PC-9 (cell line): ENCODE measurements at regions of chr3 and their contacts with region 1.

Region 1: DNA sequence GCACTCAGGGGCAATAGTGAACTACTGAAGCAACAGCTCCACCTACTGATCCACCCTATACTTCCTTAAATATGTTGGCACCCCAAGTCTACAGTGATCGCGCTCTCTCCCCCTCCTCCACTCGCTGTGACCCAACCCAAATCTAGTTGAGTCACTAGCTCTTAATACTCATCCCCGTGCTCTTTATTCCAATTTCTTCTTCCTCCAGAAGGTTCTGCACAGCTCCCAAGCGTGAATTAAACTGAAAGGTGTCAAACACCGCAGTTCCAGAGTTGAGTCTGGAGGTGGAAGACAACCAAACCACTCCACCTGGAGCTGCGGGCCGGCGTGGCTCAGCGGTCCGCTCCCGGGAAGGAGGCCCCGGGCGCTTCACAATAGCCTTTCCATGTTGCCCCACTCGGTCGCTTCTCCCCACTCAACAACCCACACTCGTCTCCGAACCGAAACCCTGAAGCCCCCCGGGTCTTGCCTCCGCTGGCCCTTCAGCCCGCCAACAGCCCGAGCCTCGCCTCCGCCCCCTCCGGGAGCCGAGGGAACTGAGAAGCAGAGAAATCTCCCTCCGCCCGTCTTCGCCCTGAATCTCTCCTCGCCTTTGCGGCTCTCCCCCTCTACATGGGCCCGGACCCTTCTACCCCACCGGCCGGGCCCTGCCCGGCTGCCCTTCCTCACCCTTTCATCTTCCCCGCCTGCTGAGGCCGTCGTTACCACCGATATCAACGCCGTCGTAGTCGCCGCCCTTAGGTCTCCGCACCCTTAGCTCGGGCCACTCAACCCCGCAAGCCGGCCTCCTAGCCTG is 578 bp downstream of the NAA50 start:
- DNase-seq: peak; percentile 79 to 86
- H3K4me3 ChIP-seq: peak overlapping the region; percentile 77
- H3K27ac ChIP-seq: peak overlapping the region; percentile 98
- H3K4me1 ChIP-seq: peaks cover 51% of the 10 kb centered on the region
- H3K27me3 ChIP-seq: no peaks in the 10 kb centered on the region
- CTCF ChIP-seq: peak; percentile 72

Region 2: DNA sequence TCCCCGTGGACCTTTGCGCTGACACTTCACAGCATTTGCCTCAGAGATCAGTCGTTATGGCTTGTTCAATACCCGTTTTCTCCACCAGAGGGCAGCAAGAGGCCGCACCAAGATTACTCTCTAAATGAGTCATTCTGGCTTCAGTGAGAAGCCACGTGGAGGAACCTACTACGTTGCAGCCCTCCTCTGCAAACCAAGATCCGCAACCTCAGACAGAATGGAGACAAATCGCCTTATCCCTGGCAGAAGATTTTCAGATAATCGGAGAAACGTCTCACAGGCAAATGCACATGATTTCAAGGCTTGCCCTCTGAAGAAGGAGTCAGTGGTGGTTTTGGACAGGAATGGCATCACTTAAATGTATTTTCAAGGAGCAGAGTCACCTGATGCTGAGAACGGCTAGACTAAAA is 694.2 kb before region 1 on chr3:
- CTCF ChIA-PET with region 1: no interaction called
- POLR2A ChIA-PET with region 1: no interaction called
- intact Hi-C with region 1: loop called (anchors 1 kb)
- DNase-seq: peak; percentile 63 to 82
- H3K4me3 ChIP-seq: no peak overlapping the region
- H3K27ac ChIP-seq: no peak overlapping the region
- H3K4me1 ChIP-seq: no peaks in the 10 kb centered on the region; the same call in 1 of the 2 replicates
- H3K27me3 ChIP-seq: no peaks in the 10 kb centered on the region
- CTCF ChIP-seq: peak; percentile 94

Region 3: GRCh38 chr3:113575206-113575605 is 170.3 kb before region 1 on chr3:
- CTCF ChIA-PET with region 1: no interaction called
- POLR2A ChIA-PET with region 1: no interaction called
- intact Hi-C with region 1: loop called (anchors 5 kb)
- DNase-seq: no peak
- H3K4me3 ChIP-seq: no peak overlapping the region
- H3K27ac ChIP-seq: no peak overlapping the region
- H3K4me1 ChIP-seq: peaks cover 13% of the 10 kb centered on the region
- H3K27me3 ChIP-seq: no peaks in the 10 kb centered on the region
- CTCF ChIP-seq: no peak

Region 4: GRCh38 chr3:113783463-113783862 is 38.0 kb after region 1 on chr3:
- CTCF ChIA-PET with region 1: interaction called, 6 read pairs
- POLR2A ChIA-PET with region 1: no interaction called
- intact Hi-C with region 1: loop called (anchors 1 kb)
- DNase-seq: peak; percentile 14 to 56
- H3K4me3 ChIP-seq: no peak overlapping the region
- H3K27ac ChIP-seq: peak overlapping the region; percentile 60; the same call in 1 of the 2 replicates
- H3K4me1 ChIP-seq: no peaks in the 10 kb centered on the region
- H3K27me3 ChIP-seq: no peaks in the 10 kb centered on the region
- CTCF ChIP-seq: no peak

Region 5: GRCh38 chr3:113897373-113897777 is 151.9 kb after region 1 on chr3:
- CTCF ChIA-PET with region 1: no interaction called
- POLR2A ChIA-PET with region 1: no interaction called
- intact Hi-C with region 1: loop called (anchors 1 kb)
- DNase-seq: peak; percentile 23 to 85
- H3K4me3 ChIP-seq: peak overlapping the region; percentile 49
- H3K27ac ChIP-seq: peak overlapping the region; percentile 48
- H3K4me1 ChIP-seq: peaks cover 33% of the 10 kb centered on the region
- H3K27me3 ChIP-seq: no peaks in the 10 kb centered on the region
- CTCF ChIP-seq: no peak

Region 6: DNA sequence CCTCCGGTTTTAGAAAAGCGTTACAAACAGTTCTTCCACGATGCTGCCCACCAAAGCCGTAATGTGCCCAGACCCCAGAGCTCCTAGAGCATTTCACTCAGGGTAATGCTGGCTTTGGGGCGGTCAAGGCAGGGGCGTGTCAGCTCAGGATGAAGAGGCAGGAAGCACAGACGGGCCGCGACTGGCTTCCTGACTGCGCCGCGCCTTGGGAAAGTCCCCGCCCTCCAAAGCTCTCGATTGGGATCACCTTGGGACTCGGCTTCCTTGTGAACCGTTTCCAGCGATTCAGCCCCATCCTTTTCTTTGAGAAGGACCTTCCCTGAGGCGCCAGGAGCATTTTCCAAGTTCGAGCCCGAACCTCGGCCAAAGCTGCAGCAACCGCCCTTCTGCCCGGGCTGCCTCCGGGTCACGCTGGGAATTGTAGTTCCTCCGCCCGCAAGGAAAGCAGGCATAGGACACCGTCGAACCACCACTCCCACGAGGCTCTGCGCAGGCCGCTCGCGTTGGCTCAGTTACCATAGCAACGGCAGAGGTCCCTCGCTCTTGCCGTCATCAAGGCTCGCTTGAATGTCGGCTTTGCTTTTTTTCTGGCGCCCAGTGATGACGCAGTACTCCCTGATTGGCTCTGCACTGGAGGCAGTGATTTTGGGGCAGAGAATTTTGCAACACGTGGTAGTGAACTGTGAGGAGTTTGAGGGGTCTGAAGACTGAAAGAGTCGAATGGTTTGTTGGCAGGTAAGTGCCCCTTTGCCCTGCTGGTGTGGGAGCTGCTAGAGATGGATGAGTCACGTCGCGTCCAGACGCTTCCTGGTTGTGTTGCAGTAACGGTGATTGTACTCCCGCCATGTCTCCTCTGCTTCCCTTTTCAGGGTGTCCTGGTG is 310.9 kb after region 1 on chr3 and contains the starts of genes CCDC191 and QTRT2:
- CTCF ChIA-PET with region 1: no interaction called
- POLR2A ChIA-PET with region 1: interaction called, 3 read pairs
- intact Hi-C with region 1: loop called (anchors 5 kb)
- DNase-seq: peak; percentile 98
- H3K4me3 ChIP-seq: peak within 1 kb of the TSS; percentile 85
- H3K27ac ChIP-seq: peak within 1 kb of the TSS; percentile 66
- H3K4me1 ChIP-seq: peaks cover 25% of the 10 kb centered on the region
- H3K27me3 ChIP-seq: no peaks in the 10 kb centered on the region
- CTCF ChIP-seq: no peak
- total RNA-seq, gene CCDC191: 11.0 and 13.2 TPM in 2 replicates
- total RNA-seq, gene QTRT2: 30.4 and 33.4 TPM in 2 replicates